ENCODE measurements at regions of chr2 and their contacts with region 1.

Region 1: DNA sequence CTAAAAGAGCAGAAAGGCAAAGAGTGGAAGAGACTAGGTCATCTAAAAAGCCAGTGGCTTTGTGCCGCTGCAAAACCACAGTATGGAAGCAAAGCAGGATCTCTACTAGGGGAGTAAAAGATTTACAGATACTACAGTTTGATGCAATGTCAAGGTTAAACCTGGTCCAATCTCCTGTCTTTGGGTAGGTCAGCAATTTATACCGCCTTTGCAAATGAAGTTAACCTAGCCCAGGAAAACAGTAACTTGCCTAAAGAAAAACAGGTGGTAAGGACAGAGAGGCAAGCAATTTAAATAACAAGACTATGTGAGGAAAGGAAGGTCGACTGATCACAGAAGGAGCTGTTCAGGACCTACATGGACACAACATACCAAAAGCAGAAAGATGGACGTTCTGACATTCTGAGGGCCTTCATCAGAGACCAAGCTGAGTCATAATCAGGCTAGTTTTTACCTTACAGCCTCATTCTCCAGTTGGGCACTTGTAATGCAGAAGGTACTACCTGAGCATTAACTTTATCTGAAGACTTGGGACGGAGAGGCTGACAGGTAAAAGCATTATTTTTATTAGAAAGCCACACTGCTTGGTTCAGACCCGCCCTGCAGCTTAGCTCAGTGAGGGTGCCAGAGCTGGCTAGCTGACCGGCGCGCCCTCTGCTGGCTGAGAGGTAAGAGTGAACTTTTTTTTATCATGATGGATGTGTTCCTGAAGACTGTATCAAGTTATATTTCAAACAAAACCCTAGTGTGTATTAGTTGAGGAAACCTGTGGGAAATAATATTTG is 15.9 kb downstream of the CDKL4 start:
- DNase-seq: peak; percentile 58 to 90 (median 75)
- ATAC-seq: peak; percentile 83 to 86 (median 85)
- H3K4me3 ChIP-seq: no peak overlapping the region
- H3K4me3 Mint-ChIP-seq: peak overlapping the region; percentile 54 to 71 (median 63)
- H3K27ac ChIP-seq: no peak overlapping the region
- H3K27ac Mint-ChIP-seq: peak overlapping the region; percentile 53 to 88
- H3K4me1 ChIP-seq: peaks cover 2 to 8% of the 10 kb centered on the region in 2 experiments
- H3K4me1 Mint-ChIP-seq: peaks cover 19 to 27% (median 20%) of the 10 kb centered on the region in 3 donors
- H3K27me3 ChIP-seq: no peaks in the 10 kb centered on the region
- H3K27me3 Mint-ChIP-seq: no peaks in the 10 kb centered on the region

Region 2: DNA sequence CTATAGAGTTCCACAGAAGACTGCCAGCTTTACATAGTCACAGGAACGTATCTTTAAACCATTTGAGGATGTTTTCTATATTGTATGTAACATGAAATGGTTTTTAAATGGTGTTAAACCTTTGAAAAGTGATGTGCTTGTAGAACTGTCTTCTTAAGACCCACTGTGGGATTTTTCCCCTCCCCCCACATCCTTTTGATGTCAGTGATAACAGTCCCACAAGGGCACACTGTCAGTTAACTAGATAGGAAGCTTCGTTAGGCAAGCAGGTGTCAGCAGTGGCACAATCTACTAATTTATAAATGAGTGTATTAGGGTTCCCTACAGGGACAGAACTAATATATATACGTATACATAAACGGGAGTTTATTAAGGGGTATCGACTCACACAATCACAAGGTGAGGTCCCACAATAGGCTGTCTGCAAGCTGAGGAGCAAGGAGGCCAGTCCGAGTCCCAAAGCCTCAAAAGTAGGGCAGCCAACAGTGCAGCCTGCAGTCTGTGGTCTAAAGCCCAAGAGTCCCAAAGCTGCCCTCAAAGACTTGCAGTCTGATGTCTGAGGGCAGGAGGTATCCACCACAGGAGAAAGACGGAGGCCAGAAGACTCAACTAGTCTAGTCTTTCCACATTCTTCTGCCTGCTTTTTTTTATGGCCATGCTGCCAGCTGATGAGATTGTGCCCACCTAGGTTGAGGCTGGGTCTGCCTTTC is 601.3 kb before region 1 on chr2:
- CTCF ChIA-PET with region 1: no interaction called
- POLR2A ChIA-PET with region 1: no interaction called
- DNase-seq: peak in 29 of 35 experiments; percentile 5 to 66 (median 33)
- ATAC-seq: peak; percentile 72 to 91 (median 84)
- H3K4me3 ChIP-seq: no peak overlapping the region
- H3K4me3 Mint-ChIP-seq: peak overlapping the region in 1 of 3 donors; percentile 25
- H3K27ac ChIP-seq: no peak overlapping the region
- H3K27ac Mint-ChIP-seq: peak overlapping the region; percentile 66 to 72
- H3K4me1 ChIP-seq: peaks cover 4 to 15% of the 10 kb centered on the region in 2 experiments
- H3K4me1 Mint-ChIP-seq: peaks cover 15 to 25% (median 19%) of the 10 kb centered on the region in 3 donors
- H3K27me3 ChIP-seq: no peaks in the 10 kb centered on the region
- H3K27me3 Mint-ChIP-seq: no peaks in the 10 kb centered on the region

Region 3: DNA sequence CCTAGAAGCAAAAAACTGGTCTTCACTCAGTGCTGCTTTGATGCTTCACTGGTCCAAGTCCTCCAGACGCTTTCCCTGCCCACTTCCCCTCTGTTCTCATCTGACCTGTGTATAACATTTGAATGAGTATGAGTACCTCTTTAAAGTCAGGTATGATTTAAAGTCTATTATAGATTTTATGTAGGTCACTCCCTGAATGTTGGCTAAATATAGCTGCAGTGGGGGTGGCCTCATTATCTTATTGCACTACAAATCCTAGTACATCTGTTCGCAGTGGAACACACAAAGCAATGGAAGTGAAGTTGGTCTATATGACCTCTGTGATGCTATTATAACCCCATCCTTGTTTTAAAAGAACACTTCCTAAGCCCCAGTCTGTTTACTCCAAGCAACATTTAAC is 304.9 kb before region 1 on chr2:
- CTCF ChIA-PET with region 1: interaction called in 1 of 2 experiments, 3 read pairs
- POLR2A ChIA-PET with region 1: interaction called in 1 of 2 experiments, 17 read pairs
- DNase-seq: no peak
- ATAC-seq: no peak
- H3K4me3 ChIP-seq: no peak overlapping the region
- H3K4me3 Mint-ChIP-seq: no peak overlapping the region
- H3K27ac ChIP-seq: no peak overlapping the region
- H3K27ac Mint-ChIP-seq: no peak overlapping the region
- H3K4me1 ChIP-seq: no peaks in the 10 kb centered on the region
- H3K4me1 Mint-ChIP-seq: no peaks in the 10 kb centered on the region
- H3K27me3 ChIP-seq: no peaks in the 10 kb centered on the region
- H3K27me3 Mint-ChIP-seq: peaks cover 0 to 2% of the 10 kb centered on the region in 2 donors

Region 4: GRCh38 chr2:38947240-38948239 is 280.3 kb before region 1 on chr2:
- CTCF ChIA-PET with region 1: interaction called, 8 to 121 read pairs
- POLR2A ChIA-PET with region 1: no interaction called
- DNase-seq: peak in 33 of 35 experiments; percentile 15 to 74 (median 45)
- ATAC-seq: peak; percentile 45 to 75 (median 58)
- H3K4me3 ChIP-seq: no peak overlapping the region
- H3K4me3 Mint-ChIP-seq: no peak overlapping the region
- H3K27ac ChIP-seq: no peak overlapping the region
- H3K27ac Mint-ChIP-seq: no peak overlapping the region
- H3K4me1 ChIP-seq: no peaks in the 10 kb centered on the region
- H3K4me1 Mint-ChIP-seq: no peaks in the 10 kb centered on the region
- H3K27me3 ChIP-seq: peaks cover 0 to 3% of the 10 kb centered on the region in 2 experiments
- H3K27me3 Mint-ChIP-seq: no peaks in the 10 kb centered on the region

Region 5: DNA sequence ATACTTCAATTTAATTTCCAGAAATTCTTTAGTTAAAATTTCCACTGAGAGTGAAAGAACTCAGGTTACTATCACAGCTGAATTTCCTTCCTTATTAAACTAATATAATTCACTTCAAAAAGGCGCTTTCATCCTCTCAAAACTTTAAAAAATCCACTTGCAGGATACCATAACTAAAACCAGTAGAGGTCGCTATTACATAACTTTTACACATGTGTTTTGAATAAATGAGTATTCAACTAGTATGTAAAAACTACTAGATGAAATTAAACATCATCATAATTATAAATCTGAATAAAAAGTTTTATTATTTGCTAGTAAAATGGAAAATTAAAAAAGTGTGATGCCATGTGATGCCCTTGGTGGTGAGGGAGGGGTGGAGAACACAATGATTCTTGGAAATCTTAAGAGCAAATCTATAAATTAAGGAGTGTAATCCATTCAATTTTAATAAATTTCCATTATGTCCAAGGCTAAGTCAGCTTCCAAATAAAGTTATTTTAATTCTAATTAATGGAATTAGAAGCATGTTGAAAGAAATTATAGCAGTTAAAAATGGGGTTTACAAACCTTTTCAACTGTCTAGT is 168.4 kb before region 1 on chr2:
- CTCF ChIA-PET with region 1: interaction called, 62 to 158 read pairs
- POLR2A ChIA-PET with region 1: interaction called in 1 of 2 experiments, 19 read pairs
- DNase-seq: peak in 1 of 35 experiments; percentile 75
- ATAC-seq: no peak
- H3K4me3 ChIP-seq: no peak overlapping the region
- H3K4me3 Mint-ChIP-seq: no peak overlapping the region
- H3K27ac ChIP-seq: no peak overlapping the region
- H3K27ac Mint-ChIP-seq: no peak overlapping the region
- H3K4me1 ChIP-seq: no peaks in the 10 kb centered on the region
- H3K4me1 Mint-ChIP-seq: peaks cover 6 to 16% (median 8%) of the 10 kb centered on the region in 3 donors
- H3K27me3 ChIP-seq: no peaks in the 10 kb centered on the region
- H3K27me3 Mint-ChIP-seq: no peaks in the 10 kb centered on the region

Region 6: DNA sequence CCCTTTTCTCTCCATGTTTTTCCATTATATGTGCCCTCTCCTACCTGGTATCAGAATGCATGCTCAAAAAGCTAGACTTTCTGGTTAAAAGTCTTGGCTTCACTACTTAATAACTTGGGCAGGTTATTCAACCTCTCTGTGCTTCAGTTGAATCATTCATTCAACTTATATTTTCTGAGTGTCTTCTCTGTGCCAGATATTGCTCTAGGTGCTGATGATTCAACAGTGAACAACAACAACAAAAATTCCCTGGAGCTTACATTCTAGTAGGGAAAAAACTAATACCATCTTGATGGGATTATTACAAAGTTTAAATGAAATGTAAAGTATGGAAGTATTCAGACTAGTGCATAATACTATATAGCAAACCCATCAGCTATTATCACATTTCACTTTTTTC is 162.2 kb before region 1 on chr2:
- CTCF ChIA-PET with region 1: interaction called, 21 to 96 read pairs
- POLR2A ChIA-PET with region 1: interaction called in 1 of 2 experiments, 19 read pairs
- DNase-seq: no peak
- ATAC-seq: no peak
- H3K4me3 ChIP-seq: no peak overlapping the region
- H3K4me3 Mint-ChIP-seq: no peak overlapping the region
- H3K27ac ChIP-seq: no peak overlapping the region
- H3K27ac Mint-ChIP-seq: peak overlapping the region; percentile 56 to 73
- H3K4me1 ChIP-seq: no peaks in the 10 kb centered on the region
- H3K4me1 Mint-ChIP-seq: peaks cover 20 to 42% (median 24%) of the 10 kb centered on the region in 3 donors
- H3K27me3 ChIP-seq: no peaks in the 10 kb centered on the region
- H3K27me3 Mint-ChIP-seq: no peaks in the 10 kb centered on the region

Region 7: DNA sequence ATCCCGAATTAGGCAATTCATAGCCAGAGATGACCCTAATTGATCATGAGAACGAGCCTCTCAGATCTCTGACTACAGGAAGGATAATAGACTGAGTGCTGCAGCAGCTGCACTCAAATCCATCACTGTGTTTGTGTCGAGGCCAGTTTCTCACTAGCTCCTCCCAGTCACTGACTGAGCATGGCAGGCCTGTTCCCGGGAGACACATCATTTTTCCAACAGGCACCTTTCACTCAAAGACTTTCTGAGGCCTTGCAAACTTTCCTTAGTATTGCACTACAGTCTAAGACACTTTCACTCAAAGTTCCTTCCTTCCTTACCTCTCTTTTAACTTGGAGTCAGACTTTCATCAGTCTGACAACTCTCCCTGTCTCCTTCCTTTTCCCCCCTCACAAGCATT is 120.7 kb before region 1 on chr2:
- CTCF ChIA-PET with region 1: interaction called, 6 to 11 read pairs
- POLR2A ChIA-PET with region 1: interaction called, 3 to 9 read pairs
- DNase-seq: no peak
- ATAC-seq: no peak
- H3K4me3 ChIP-seq: no peak overlapping the region
- H3K4me3 Mint-ChIP-seq: no peak overlapping the region
- H3K27ac ChIP-seq: no peak overlapping the region
- H3K27ac Mint-ChIP-seq: peak overlapping the region; percentile 37 to 38
- H3K4me1 ChIP-seq: peaks cover 2 to 25% of the 10 kb centered on the region in 2 experiments
- H3K4me1 Mint-ChIP-seq: peaks cover 67 to 77% (median 69%) of the 10 kb centered on the region in 3 donors
- H3K27me3 ChIP-seq: no peaks in the 10 kb centered on the region
- H3K27me3 Mint-ChIP-seq: no peaks in the 10 kb centered on the region

Region 8: DNA sequence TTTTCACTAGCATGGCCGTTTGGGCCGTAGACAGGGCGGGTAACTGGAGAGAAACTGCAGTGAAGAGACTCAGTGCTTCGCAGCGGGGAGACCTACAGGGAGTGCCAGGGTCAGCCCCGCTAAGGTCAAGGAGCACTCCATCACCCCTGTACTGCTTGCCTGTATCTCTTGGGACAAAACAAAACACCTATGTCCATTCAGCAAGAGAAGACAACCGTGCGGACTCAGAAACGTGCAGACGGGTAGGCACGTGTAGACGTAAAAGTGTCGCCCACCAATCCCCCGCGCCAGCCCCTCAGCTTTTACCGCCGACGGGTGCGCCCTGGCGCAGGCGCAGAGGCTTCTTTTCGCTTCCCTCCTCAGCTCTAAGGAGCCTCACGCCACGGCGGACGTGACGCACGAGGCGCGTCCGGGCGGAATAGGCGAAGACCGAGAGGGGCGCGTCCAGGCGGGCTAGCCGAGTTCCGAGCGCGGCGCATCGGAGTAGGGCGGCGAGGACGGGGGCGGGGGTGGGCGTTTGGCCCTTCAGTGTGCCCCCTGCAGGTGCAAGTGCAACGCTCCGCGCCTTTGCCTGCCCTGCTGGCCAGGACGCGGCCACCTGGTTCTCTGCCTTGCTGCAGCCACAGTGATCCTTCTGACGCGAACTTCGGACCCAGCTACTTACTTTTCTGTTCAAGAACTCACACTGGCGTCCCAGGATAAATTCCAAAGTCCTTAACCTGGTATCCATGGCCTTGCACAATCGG is 103.6 kb before region 1 on chr2:
- CTCF ChIA-PET with region 1: interaction called, 5 to 32 read pairs
- POLR2A ChIA-PET with region 1: interaction called in 1 of 2 experiments, 4 read pairs
- DNase-seq: peak; percentile 87 to 98 (median 95)
- ATAC-seq: peak; percentile 67 to 80 (median 70)
- H3K4me3 ChIP-seq: peak overlapping the region; percentile 77 to 94
- H3K4me3 Mint-ChIP-seq: peak overlapping the region; percentile 90 to 99 (median 93)
- H3K27ac ChIP-seq: peak overlapping the region; percentile 91
- H3K27ac Mint-ChIP-seq: peak overlapping the region; percentile 97 to 98
- H3K4me1 ChIP-seq: peaks cover 27 to 39% of the 10 kb centered on the region in 2 experiments
- H3K4me1 Mint-ChIP-seq: peaks cover 53 to 66% (median 65%) of the 10 kb centered on the region in 3 donors
- H3K27me3 ChIP-seq: no peaks in the 10 kb centered on the region
- H3K27me3 Mint-ChIP-seq: no peaks in the 10 kb centered on the region

Measured in T-cell (primary cell).